Calu3 (cell line): ENCODE measurements at regions of chr1 and their contacts with region 1.

Region 1: GRCh38 chr1:77759071-77760028 is at the start of gene USP33:
- DNase-seq: peak; percentile 95
- H3K4me3 Mint-ChIP-seq: peak within 1 kb of the TSS; percentile 92
- H3K27ac Mint-ChIP-seq: peak within 1 kb of the TSS; percentile 78
- H3K4me1 Mint-ChIP-seq: peaks cover 32% of the 10 kb centered on the region
- H3K27me3 Mint-ChIP-seq: no peaks in the 10 kb centered on the region
- CTCF ChIP-seq: no peak
- total RNA-seq, gene USP33: 52.9 and 61.7 TPM in 2 replicates

Region 2: GRCh38 chr1:77744576-77744975 is 14.8 kb before region 1 on chr1:
- CTCF ChIA-PET with region 1: no interaction called
- intact Hi-C with region 1: loop called (anchors 1 kb)
- DNase-seq: no peak
- H3K4me3 Mint-ChIP-seq: no peak overlapping the region
- H3K27ac Mint-ChIP-seq: peak overlapping the region; percentile 2
- H3K4me1 Mint-ChIP-seq: peaks cover 43% of the 10 kb centered on the region
- H3K27me3 Mint-ChIP-seq: no peaks in the 10 kb centered on the region
- CTCF ChIP-seq: no peak

Region 3: DNA sequence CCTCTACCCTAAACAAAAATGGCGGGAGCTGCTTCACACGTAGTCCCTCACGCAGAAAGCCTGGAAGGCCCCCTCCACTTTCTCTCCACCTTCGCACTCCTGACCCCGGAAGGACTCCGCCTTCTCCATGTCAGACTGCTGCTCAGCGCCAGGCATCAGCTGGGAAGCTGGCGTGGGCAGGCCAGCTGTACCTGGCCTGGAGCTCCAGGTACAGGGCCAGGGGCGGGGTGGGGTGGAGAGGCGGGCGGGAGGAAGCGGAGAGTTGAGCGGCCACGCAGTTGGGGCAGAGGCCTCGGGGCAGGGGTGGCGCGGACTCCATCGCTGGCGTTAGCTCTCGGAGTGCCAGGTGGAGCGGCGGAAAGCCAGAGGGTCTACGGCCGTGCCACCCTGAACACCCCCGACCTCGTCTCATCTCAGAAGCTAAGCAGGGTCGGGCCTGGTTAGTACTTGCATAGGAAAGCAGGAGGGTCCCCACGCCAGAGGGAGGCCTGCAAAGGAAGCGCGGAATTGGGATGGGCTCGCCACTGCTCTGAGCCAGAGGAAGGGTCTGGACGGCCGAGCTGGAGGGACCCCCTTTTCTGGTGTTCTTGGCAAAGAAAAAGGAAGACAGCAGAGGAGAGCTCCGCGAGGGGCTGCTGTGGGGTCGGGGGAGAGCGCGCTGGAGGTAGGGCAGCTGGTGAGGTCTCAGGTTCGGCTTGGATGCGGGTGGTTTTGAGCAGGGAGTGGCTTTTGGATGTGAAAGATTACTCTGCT is 20.4 kb after region 1 on chr1 and contains the start of gene MIGA1:
- CTCF ChIA-PET with region 1: interaction called, 6 read pairs
- intact Hi-C with region 1: loop called (anchors 2 kb)
- DNase-seq: peak; percentile 87
- H3K4me3 Mint-ChIP-seq: peak within 1 kb of the TSS; percentile 95
- H3K27ac Mint-ChIP-seq: peak within 1 kb of the TSS; percentile 76
- H3K4me1 Mint-ChIP-seq: peaks cover 21% of the 10 kb centered on the region
- H3K27me3 Mint-ChIP-seq: no peaks in the 10 kb centered on the region
- CTCF ChIP-seq: no peak
- total RNA-seq, gene MIGA1: 18.8 and 19.1 TPM in 2 replicates